Dendritic cell treated with granulocyte-macrophage colony-stimulating factor and Interleukin-4, amounts not matched to agents 40 ng/mL and 50 ng/mL, for 4 days (primary cell): ENCODE measurements at regions of chr2 and their contacts with region 1.

Region 1: DNA sequence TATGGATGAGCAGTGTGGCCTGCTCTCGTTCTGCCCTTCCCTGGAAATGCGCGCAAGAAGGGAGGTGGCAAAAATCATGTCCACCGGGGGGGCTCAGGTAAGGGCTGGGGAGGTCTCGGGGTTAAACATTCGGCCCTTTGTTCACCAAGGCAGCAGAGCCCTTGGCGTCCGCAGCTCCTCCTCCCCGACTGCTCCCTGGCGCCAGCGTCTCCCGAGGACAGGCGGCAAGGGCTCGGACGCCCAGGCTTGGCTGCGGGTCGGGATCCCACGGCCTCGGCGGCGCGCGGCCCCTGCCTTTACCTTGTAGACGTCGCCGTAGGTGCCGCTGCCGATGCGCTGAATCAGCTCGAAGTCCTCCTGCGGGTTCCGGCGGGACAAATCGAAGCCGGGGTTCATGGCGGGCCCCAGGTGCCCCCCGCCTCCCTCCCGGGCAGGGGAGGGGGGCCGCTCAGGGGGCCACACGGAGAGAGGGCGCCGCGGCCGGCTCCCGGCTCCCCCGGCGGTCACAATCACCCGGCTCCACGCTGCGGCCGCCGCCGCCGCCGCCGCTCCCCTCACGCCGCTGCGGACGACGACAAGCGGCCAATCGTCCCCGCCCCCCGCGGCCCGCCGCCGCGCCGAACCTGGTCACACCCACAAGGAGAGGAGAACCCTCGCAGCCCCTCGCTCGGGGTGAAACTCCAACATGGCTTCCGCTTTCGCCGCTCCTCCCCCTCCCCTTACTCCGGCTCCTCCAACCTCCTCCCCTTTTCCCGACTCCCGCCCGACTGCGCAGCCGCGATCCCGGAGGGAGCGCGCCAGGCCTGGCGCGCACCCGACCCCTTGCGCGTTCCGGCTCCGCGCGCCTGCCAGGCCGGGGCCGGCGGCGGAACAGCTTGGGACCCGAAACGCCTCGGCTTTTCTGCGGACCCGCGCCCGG is at the start of gene MAP4K3:
- H3K4me3 Mint-ChIP-seq: peak within 1 kb of the TSS; percentile 92
- H3K27ac Mint-ChIP-seq: peak within 1 kb of the TSS; percentile 89
- H3K4me1 Mint-ChIP-seq: peaks cover 45% of the 10 kb centered on the region
- H3K27me3 Mint-ChIP-seq: peaks cover 7% of the 10 kb centered on the region

Region 2: DNA sequence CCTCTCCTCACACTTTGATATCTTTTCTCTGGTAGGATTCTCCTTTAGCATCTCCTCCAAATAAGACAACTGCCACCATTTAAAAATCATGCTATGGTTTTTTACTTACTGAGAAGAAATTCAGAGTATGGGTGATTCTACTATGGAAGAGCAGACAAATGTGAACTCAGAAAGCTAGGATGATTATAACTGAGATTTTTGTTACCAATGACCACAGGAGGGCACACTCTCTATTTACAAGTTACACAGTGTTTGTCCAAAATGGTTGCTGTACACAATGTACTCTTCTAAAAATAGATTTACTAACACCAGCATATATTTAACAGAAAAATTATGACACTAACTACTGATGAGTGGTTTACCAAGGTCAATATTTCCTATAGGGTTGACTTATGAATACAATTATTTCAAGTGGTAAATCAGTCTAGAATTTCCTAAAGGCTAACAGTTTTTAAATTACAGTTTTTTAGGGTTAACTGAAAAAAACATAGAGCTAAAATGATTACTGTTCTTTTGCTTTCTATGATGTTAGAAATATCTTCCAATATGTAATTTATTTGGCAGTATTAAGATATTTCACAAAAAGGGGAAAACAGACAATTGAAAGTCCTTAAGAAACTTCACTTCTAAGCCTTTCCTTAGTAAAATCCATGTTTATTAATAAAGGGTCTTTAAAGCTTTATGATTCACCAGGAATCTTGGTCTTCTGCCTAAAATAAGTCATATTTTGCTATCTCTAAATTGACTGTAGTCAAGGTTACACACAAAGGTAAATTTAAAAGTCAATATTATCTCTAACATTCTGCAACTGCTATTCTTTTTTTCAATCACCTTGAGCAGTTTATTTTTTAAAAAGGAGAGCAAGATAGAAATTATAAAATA is 57.0 kb before region 1 on chr2:
- intact Hi-C with region 1: loop called (anchors 5 kb)
- H3K4me3 Mint-ChIP-seq: no peak overlapping the region
- H3K27ac Mint-ChIP-seq: no peak overlapping the region
- H3K4me1 Mint-ChIP-seq: peaks cover 15% of the 10 kb centered on the region
- H3K27me3 Mint-ChIP-seq: no peaks in the 10 kb centered on the region

Region 3: DNA sequence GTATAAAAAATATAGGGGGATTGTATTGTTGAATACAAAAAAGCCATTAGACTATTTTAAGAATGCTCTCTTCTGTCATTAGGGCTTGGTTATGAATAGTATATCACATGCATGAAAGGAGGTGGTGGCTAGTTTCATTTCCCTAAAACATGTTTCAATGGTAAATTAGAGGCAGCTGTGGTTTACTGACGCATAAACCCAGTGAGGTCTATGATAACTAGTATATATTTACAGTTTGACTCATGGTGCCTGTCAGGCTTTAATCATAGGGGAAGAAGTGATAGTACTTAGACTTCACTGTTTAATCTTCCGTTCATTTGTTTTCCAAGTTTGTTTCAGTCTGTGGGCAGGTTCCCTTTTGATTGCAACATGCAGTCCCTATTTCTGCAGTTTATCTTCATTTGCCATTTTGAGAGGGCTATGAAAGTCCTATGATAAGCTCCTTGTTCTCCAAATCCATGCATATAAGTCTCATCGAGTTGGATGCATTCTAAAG is 55.3 kb after region 1 on chr2:
- intact Hi-C with region 1: loop called (anchors 5 kb)
- H3K4me3 Mint-ChIP-seq: peak overlapping the region; percentile 54
- H3K27ac Mint-ChIP-seq: peak overlapping the region; percentile 73
- H3K4me1 Mint-ChIP-seq: peaks cover 42% of the 10 kb centered on the region
- H3K27me3 Mint-ChIP-seq: peaks cover 49% of the 10 kb centered on the region

Region 4: GRCh38 chr2:39513641-39514094 is 76.8 kb after region 1 on chr2:
- intact Hi-C with region 1: loop called (anchors 10 kb)
- H3K4me3 Mint-ChIP-seq: no peak overlapping the region
- H3K27ac Mint-ChIP-seq: peak overlapping the region; percentile 10
- H3K4me1 Mint-ChIP-seq: peaks cover 44% of the 10 kb centered on the region
- H3K27me3 Mint-ChIP-seq: peaks cover 56% of the 10 kb centered on the region

Region 5: GRCh38 chr2:39568561-39569006 is 131.7 kb after region 1 on chr2:
- intact Hi-C with region 1: no loop called
- H3K4me3 Mint-ChIP-seq: no peak overlapping the region
- H3K27ac Mint-ChIP-seq: no peak overlapping the region
- H3K4me1 Mint-ChIP-seq: no peaks in the 10 kb centered on the region
- H3K27me3 Mint-ChIP-seq: peaks cover 2% of the 10 kb centered on the region

Region 6: GRCh38 chr2:39778962-39779851 is 342.4 kb after region 1 on chr2 and contains the start of gene THUMPD2:
- intact Hi-C with region 1: loop called (anchors 5 kb)
- H3K4me3 Mint-ChIP-seq: peak within 1 kb of the TSS; percentile 88
- H3K27ac Mint-ChIP-seq: peak within 1 kb of the TSS; percentile 95
- H3K4me1 Mint-ChIP-seq: peaks cover 62% of the 10 kb centered on the region
- H3K27me3 Mint-ChIP-seq: peaks cover 2% of the 10 kb centered on the region